ENCODE measurements at regions of chr5 and their contacts with region 1.

Region 1: DNA sequence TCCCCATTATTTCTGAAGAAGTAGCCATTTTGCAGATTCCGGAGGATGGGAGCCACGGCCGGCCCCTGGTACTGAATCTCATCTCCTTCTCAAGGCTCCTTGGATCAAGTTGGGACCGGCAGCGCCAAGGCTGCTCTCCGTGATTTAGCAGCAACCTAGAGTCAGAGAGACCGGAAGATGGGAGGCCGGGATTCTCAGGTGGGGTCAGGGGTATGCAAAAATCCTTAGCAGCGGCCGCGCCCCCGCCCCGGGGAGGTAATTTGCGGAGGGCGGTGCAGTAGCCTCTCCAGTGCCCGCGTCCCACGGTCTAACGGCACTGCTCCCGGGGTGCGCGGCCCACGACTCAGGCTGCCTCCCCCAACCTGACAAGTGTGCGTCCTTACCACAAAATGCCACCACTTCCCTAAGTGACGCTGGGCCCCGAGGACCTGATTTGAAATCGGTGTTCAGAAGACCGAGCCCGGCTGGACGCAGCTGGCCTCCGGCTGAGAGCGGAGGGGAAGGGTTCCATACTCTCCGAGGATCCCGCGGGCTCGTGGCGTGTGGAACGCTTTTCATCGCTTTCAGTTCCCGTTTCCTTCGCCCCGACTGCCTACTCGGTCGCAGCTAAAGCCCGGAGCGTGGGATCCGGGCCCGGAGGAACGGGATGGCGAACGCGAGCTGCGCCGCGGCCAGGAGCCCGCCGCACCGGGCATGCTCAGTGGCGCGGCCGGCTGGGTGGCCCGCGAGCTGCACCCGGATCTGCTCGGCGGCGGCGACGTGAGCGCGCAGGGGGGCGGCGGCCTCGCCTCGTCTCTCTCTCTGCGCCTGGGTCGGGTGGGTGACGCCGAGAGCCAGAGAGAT is at the start of gene SCAMP1:
- DNase-seq: peak in 1 of 2 donors; percentile 91
- H3K4me3 ChIP-seq: peak within 1 kb of the TSS; percentile 91 to 100
- H3K27ac ChIP-seq: peak within 1 kb of the TSS; percentile 96
- H3K4me1 ChIP-seq: peaks cover 19% of the 10 kb centered on the region
- H3K27me3 ChIP-seq: no peaks in the 10 kb centered on the region
- CTCF ChIP-seq: peak in 2 of 3 experiments; percentile 10 to 38
- POLR2A ChIP-seq: peak in 1 of 2 donors; percentile 80
- total RNA-seq, gene SCAMP1: 21.9 TPM

Region 2: DNA sequence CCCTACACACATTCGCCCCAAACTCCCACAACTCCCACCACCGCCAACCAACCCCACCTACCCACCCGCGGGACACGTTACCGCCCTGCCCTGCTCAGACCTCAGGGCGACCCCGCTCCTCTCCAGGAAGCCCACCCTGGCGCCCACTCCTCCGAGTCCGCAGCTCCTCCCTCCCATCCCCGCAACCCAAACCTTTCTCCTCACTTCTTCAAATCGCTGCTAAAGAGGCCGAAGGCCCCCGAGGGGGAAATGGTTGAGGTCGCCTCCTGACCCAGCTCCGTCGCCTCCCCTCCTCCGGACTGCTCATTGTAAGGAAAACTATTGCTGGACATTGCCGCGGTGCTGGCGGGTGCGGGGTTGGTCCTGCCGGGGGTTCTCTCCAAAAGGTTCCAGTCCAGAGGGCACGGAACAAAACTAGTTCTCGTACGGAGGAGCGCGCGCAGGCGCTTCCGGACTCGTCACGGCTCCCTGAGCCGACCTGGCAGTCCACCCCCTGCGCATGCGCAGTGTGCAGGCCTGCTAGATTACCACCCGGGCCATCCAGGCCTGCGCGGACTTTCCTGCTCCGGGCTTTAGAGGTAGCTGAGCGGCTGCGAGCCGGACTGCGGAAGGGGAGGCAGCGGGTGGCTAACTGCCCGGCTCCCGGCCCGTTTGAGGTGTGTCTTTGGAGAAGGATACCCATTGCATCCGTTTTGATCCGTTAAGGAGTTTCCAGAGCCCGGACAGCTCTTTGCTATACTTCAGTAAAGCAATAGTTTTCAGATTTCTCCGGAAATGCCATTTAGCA is 65.6 kb before region 1 on chr5 and contains the start of gene AP3B1:
- intact Hi-C with region 1: loop called (anchors 5 kb)
- DNase-seq: peak; percentile 98 to 99
- H3K4me3 ChIP-seq: peak within 1 kb of the TSS; percentile 96 to 99
- H3K27ac ChIP-seq: peak within 1 kb of the TSS; percentile 91
- H3K4me1 ChIP-seq: peaks cover 38% of the 10 kb centered on the region
- H3K27me3 ChIP-seq: no peaks in the 10 kb centered on the region
- CTCF ChIP-seq: peak in 1 of 3 experiments; percentile 42
- POLR2A ChIP-seq: peak in 1 of 2 donors; percentile 91
- total RNA-seq, gene AP3B1: 49.6 TPM

Region 3: DNA sequence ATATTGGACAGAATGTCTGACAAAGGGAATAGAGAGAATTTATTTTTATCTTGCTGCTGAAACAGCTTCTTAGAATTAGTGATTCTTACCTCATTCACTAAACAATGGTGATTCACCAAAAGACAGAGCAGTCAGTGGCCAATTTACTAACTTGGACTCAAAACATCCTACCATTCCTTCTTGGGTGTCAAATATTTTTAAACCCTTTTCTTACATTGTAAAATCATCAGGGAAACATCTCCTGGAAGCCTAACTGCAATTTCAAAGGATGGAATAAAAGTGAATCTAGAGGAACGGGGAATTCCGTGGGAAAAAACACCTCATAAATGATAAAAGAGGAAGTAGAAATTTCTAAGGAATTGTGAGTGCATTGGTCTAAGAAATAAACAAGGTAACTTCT is 190.8 kb after region 1 on chr5:
- intact Hi-C with region 1: no loop called
- DNase-seq: no peak
- H3K4me3 ChIP-seq: no peak overlapping the region
- H3K27ac ChIP-seq: no peak overlapping the region
- H3K4me1 ChIP-seq: peaks cover 29% of the 10 kb centered on the region
- H3K27me3 ChIP-seq: no peaks in the 10 kb centered on the region
- CTCF ChIP-seq: no peak
- POLR2A ChIP-seq: no peak

Region 4: GRCh38 chr5:78661691-78662090 is 301.6 kb after region 1 on chr5:
- intact Hi-C with region 1: loop called (anchors 10 kb)
- DNase-seq: no peak
- H3K4me3 ChIP-seq: no peak overlapping the region
- H3K27ac ChIP-seq: no peak overlapping the region
- H3K4me1 ChIP-seq: peaks cover 9% of the 10 kb centered on the region
- H3K27me3 ChIP-seq: no peaks in the 10 kb centered on the region
- CTCF ChIP-seq: no peak
- POLR2A ChIP-seq: no peak